ENCODE measurements at regions of chr11 and their contacts with region 1.

Region 1: DNA sequence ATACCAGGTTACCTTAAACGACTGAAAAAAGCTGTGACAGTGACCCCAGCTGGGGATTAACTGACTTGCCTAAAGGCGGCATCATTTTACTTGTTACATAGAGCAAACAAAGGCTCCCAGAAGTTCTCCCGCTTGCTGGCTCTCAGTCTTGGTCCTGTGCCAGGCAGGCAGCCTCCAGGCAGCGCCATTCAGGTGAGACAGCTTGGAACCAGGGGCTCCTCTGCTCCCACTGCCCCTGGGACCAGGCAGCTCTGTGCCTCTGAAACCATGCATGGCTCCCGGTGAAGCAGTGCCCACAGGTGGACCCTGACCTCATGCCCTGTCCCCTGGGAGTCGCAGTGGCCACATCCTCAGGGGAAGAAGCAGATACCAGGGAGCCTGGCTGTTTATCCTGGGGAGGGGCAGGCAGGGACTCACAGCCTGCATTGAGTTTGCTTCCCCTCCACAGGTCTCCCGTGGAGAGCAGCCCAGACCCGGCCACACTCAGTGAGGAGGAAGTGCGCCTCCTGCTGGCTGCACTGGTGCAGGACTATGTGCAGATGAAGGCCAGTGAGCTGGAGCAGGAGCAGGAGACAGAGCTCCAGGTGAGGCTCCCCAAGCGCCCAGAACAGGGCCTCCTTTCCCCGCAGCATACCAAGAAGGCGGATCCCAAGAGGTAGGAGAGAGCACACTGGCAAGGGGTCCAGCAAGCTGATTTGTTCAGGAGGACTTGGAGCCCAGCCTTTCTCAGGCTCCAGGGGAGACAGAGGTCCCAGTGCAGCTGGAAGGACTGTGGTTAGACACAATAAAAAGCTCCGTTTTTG is 15.6 kb upstream of the CYP2R1 start:
- DNase-seq: peak in 1 of 2 donors; percentile 89
- H3K4me3 ChIP-seq: no peak overlapping the region
- H3K27ac ChIP-seq: no peak overlapping the region
- H3K4me1 ChIP-seq: peaks cover 3 to 4% of the 10 kb centered on the region in 2 donors
- H3K27me3 ChIP-seq: no peaks in the 10 kb centered on the region
- CTCF ChIP-seq: peak; percentile 61 to 81 (median 74)

Region 2: DNA sequence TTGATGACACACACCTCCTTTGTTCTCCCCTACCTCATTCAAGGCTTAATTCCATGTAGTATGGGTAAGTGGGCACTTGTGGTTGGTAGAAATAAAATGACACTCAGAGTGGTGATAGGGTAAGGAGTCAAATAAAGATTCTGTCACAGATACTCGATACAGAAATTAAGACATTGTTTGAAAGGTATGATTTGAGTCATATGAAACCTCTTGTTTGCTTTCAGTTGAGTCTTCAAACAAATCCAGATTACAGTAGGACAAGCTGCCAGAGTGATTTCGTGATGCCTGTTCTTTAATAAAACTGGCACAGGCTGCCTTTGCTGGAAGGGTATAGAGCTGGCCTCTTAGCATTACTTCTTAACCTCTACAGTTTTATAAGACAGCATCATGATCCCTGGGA is 762.7 kb before region 1 on chr11:
- intact Hi-C with region 1: no loop called
- DNase-seq: no peak
- H3K4me3 ChIP-seq: no peak overlapping the region
- H3K27ac ChIP-seq: no peak overlapping the region
- H3K4me1 ChIP-seq: no peaks in the 10 kb centered on the region
- H3K27me3 ChIP-seq: no peaks in the 10 kb centered on the region
- CTCF ChIP-seq: no peak

Region 3: DNA sequence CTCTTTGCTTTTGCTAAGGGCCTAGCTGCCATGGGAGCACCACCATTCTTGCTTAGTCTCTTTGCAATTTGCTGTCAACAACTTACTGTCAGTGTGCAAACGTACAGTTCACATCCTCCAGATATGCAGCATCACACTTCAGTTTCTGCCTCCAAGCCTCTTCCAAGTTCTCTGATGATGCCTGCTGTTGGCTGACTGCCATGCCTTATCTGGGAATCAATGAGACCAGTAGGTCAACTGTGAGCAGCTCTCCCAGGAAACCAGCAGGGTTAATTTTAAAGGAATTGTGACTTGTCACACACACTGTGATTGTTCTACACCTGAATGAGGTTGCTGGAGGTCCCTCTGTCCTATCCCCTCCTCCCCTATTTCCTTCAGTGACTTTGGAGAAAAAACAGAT is 464.0 kb before region 1 on chr11:
- intact Hi-C with region 1: no loop called
- DNase-seq: no peak
- H3K4me3 ChIP-seq: no peak overlapping the region
- H3K27ac ChIP-seq: no peak overlapping the region
- H3K4me1 ChIP-seq: peaks cover 0 to 6% of the 10 kb centered on the region in 2 donors
- H3K27me3 ChIP-seq: no peaks in the 10 kb centered on the region
- CTCF ChIP-seq: no peak

Region 4: GRCh38 chr11:14537134-14537599 is 370.4 kb before region 1 on chr11:
- intact Hi-C with region 1: loop called (anchors 2 kb)
- DNase-seq: no peak
- H3K4me3 ChIP-seq: no peak overlapping the region
- H3K27ac ChIP-seq: peak overlapping the region; percentile 85 to 90
- H3K4me1 ChIP-seq: peaks cover 3 to 30% of the 10 kb centered on the region in 2 donors
- H3K27me3 ChIP-seq: no peaks in the 10 kb centered on the region
- CTCF ChIP-seq: peak; percentile 27 to 87 (median 79)

Region 5: GRCh38 chr11:14789879-14790484 is 117.6 kb before region 1 on chr11:
- intact Hi-C with region 1: loop called (anchors 2 kb)
- DNase-seq: no peak
- H3K4me3 ChIP-seq: no peak overlapping the region
- H3K27ac ChIP-seq: no peak overlapping the region
- H3K4me1 ChIP-seq: no peaks in the 10 kb centered on the region
- H3K27me3 ChIP-seq: no peaks in the 10 kb centered on the region
- CTCF ChIP-seq: peak in 2 of 3 experiments; percentile 33 to 45

Region 6: GRCh38 chr11:14954581-14954980 is 47.0 kb after region 1 on chr11:
- intact Hi-C with region 1: no loop called
- DNase-seq: no peak
- H3K4me3 ChIP-seq: no peak overlapping the region
- H3K27ac ChIP-seq: no peak overlapping the region
- H3K4me1 ChIP-seq: no peaks in the 10 kb centered on the region
- H3K27me3 ChIP-seq: no peaks in the 10 kb centered on the region
- CTCF ChIP-seq: no peak

Region 7: GRCh38 chr11:15074206-15075161 is 166.9 kb after region 1 on chr11:
- intact Hi-C with region 1: loop called (anchors 1 kb)
- DNase-seq: peak; percentile 43 to 87
- H3K4me3 ChIP-seq: peak overlapping the region; percentile 52 to 62
- H3K27ac ChIP-seq: no peak overlapping the region
- H3K4me1 ChIP-seq: peaks cover 0 to 18% of the 10 kb centered on the region in 2 donors
- H3K27me3 ChIP-seq: no peaks in the 10 kb centered on the region
- CTCF ChIP-seq: peak; percentile 43 to 76 (median 67)

Measured in ascending aorta (tissue), 2 donors.